Caco-2 (cell line): ENCODE measurements at regions of chr1 and their contacts with region 1.

Region 1: DNA sequence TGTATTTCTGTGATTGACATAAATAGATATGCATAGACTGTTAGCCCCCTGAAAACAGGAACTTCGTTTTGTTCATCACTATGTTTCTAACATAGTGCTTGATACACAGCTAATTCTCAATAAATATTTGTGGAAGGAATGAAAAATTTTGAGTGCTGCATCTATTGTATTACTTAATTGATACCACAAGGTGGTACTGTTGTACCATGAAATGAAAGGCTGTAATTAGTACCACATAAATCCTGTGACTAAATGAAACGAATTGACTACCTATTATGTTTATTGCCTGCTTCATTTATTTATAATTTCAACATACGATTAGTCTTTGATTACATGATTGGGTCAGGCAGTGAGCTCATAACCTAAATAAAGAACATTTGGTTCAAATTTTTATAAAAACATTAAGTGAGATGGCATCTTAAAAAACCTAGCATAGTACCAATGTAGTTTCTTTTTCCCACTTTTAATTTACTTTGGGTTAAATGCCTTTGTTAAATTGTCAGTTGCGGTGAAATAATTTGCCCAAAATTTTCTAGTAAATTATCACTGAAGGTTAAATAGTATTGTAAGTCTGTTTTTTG is 15.0 kb upstream of the TGFB2 start:
- DNase-seq: peak in 1 of 2 experiments; percentile 9
- H3K4me3 ChIP-seq: no peak overlapping the region
- H3K4me3 Mint-ChIP-seq: no peak overlapping the region
- H3K27ac Mint-ChIP-seq: no peak overlapping the region
- H3K4me1 ChIP-seq: no peaks in the 10 kb centered on the region
- H3K4me1 Mint-ChIP-seq: no peaks in the 10 kb centered on the region
- H3K27me3 ChIP-seq: no peaks in the 10 kb centered on the region
- H3K27me3 Mint-ChIP-seq: no peaks in the 10 kb centered on the region
- CTCF ChIP-seq: peak; percentile 28 to 69

Region 2: GRCh38 chr1:218219460-218219859 is 110.7 kb before region 1 on chr1:
- CTCF ChIA-PET with region 1: no interaction called
- POLR2A ChIA-PET with region 1: no interaction called
- intact Hi-C with region 1: no loop called
- DNase-seq: no peak
- H3K4me3 ChIP-seq: no peak overlapping the region
- H3K4me3 Mint-ChIP-seq: no peak overlapping the region
- H3K27ac Mint-ChIP-seq: no peak overlapping the region
- H3K4me1 ChIP-seq: no peaks in the 10 kb centered on the region
- H3K4me1 Mint-ChIP-seq: no peaks in the 10 kb centered on the region
- H3K27me3 ChIP-seq: no peaks in the 10 kb centered on the region; the same call in 1 of the 2 replicates
- H3K27me3 Mint-ChIP-seq: peaks cover 17% of the 10 kb centered on the region
- CTCF ChIP-seq: no peak

Region 3: DNA sequence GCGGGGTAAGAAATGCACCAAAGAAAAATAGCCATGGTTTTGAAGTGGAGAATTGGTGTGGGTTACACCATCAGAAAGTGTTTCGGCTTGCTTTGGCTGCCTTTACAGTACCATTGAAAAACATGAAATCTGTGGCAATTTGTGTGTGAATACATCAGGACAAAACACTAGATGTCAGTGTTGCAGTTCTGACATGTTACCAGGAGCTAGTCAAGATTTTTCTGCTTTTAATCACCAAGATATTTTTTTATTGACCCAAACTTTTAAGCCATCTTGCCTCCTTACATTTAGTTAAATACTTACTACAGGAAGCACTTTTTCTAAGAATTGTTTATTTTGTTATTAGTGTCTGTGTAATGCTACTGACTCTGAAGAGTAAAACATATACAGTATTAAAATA is 30.7 kb before region 1 on chr1:
- CTCF ChIA-PET with region 1: no interaction called
- POLR2A ChIA-PET with region 1: interaction called, 3 read pairs
- intact Hi-C with region 1: loop called (anchors 2 kb)
- DNase-seq: peak in 1 of 2 experiments; percentile 37
- H3K4me3 ChIP-seq: no peak overlapping the region
- H3K4me3 Mint-ChIP-seq: no peak overlapping the region
- H3K27ac Mint-ChIP-seq: no peak overlapping the region
- H3K4me1 ChIP-seq: peaks cover 65% of the 10 kb centered on the region
- H3K4me1 Mint-ChIP-seq: peaks cover 36% of the 10 kb centered on the region
- H3K27me3 ChIP-seq: no peaks in the 10 kb centered on the region
- H3K27me3 Mint-ChIP-seq: no peaks in the 10 kb centered on the region
- CTCF ChIP-seq: peak; percentile 22 to 50

Region 4: DNA sequence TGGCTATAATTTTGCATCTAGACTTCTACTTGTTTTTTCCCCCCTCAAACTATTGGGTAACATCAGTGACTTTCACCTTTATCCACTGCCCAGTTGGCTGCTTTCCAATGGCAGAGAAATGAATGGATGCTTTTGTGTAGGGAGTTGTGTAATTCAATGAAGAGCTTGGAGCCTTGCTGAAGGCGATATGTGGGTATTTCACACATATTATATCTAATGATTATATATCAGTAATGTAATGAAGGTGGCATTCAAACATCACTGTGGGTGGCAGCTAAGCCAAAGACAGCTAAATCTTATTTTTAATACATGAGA is 96.2 kb after region 1 on chr1:
- CTCF ChIA-PET with region 1: no interaction called
- POLR2A ChIA-PET with region 1: no interaction called
- intact Hi-C with region 1: no loop called
- DNase-seq: no peak
- H3K4me3 ChIP-seq: no peak overlapping the region
- H3K4me3 Mint-ChIP-seq: no peak overlapping the region
- H3K27ac Mint-ChIP-seq: no peak overlapping the region
- H3K4me1 ChIP-seq: peaks cover 8% of the 10 kb centered on the region; the same call in 1 of the 2 replicates
- H3K4me1 Mint-ChIP-seq: no peaks in the 10 kb centered on the region
- H3K27me3 ChIP-seq: no peaks in the 10 kb centered on the region
- H3K27me3 Mint-ChIP-seq: no peaks in the 10 kb centered on the region
- CTCF ChIP-seq: no peak

Region 5: DNA sequence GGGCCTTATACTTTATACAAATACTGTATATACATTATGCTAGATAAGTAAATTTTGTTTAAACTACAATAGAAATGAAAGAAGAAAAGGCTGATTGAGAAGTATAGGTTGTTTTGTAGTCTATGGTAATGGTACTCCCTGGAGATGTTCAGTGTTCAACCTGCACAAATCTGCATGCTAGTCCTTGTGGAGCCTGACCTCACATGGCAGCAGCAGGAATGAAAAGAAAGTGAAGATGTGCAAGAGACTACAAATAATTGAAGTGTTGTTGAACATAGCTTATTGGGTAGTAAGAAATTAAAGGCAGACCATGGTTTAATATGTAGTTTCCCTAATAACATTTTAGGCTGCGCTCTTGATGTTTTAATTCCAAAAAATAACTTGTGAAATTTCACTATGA is 216.2 kb after region 1 on chr1:
- CTCF ChIA-PET with region 1: no interaction called
- POLR2A ChIA-PET with region 1: no interaction called
- intact Hi-C with region 1: loop called (anchors 2 kb)
- DNase-seq: peak in 1 of 2 experiments; percentile 36
- H3K4me3 ChIP-seq: no peak overlapping the region
- H3K4me3 Mint-ChIP-seq: no peak overlapping the region
- H3K27ac Mint-ChIP-seq: no peak overlapping the region
- H3K4me1 ChIP-seq: no peaks in the 10 kb centered on the region
- H3K4me1 Mint-ChIP-seq: no peaks in the 10 kb centered on the region
- H3K27me3 ChIP-seq: no peaks in the 10 kb centered on the region
- H3K27me3 Mint-ChIP-seq: no peaks in the 10 kb centered on the region
- CTCF ChIP-seq: peak in 1 of 2 experiments; percentile 33

Region 6: GRCh38 chr1:219066631-219067349 is 736.7 kb after region 1 on chr1:
- CTCF ChIA-PET with region 1: no interaction called
- POLR2A ChIA-PET with region 1: no interaction called
- intact Hi-C with region 1: loop called (anchors 1 kb)
- DNase-seq: no peak
- H3K4me3 ChIP-seq: no peak overlapping the region
- H3K4me3 Mint-ChIP-seq: no peak overlapping the region
- H3K27ac Mint-ChIP-seq: no peak overlapping the region
- H3K4me1 ChIP-seq: no peaks in the 10 kb centered on the region
- H3K4me1 Mint-ChIP-seq: no peaks in the 10 kb centered on the region
- H3K27me3 ChIP-seq: no peaks in the 10 kb centered on the region
- H3K27me3 Mint-ChIP-seq: no peaks in the 10 kb centered on the region
- CTCF ChIP-seq: peak; percentile 30 to 38